PC-9 (cell line): ENCODE measurements at regions of chr14 and their contacts with region 1.

Region 1: GRCh38 chr14:22791301-22791700 is 23.9 kb downstream of the SLC7A7 start:
- DNase-seq: no peak
- H3K4me3 ChIP-seq: no peak overlapping the region
- H3K27ac ChIP-seq: no peak overlapping the region
- H3K4me1 ChIP-seq: peaks cover 19% of the 10 kb centered on the region
- H3K27me3 ChIP-seq: no peaks in the 10 kb centered on the region
- CTCF ChIP-seq: no peak

Region 2: DNA sequence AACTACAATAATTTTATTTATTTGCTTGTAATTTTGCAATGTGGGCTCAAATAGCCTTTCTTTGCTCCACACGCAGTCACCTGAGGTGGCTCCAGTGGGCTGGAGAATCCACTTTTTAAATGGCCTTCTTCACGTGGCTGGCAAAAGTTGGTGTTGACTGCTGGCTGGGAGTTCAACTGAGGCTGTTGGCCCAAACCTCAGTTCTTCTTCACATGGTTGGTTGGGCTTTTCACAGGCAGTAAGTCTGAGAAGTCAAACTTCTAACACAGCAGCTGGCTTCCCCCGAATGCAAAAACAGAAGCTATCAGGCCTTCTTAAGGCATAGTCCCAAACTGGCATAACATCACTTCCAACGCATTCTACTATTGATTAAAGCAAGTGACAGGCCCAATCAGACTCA is 26.9 kb before region 1 on chr14:
- CTCF ChIA-PET with region 1: no interaction called
- POLR2A ChIA-PET with region 1: no interaction called
- intact Hi-C with region 1: no loop called
- DNase-seq: no peak
- H3K4me3 ChIP-seq: no peak overlapping the region
- H3K27ac ChIP-seq: no peak overlapping the region
- H3K4me1 ChIP-seq: peaks cover 7% of the 10 kb centered on the region
- H3K27me3 ChIP-seq: no peaks in the 10 kb centered on the region
- CTCF ChIP-seq: no peak

Region 3: GRCh38 chr14:22776215-22776614 is 15.1 kb before region 1 on chr14:
- CTCF ChIA-PET with region 1: interaction called, 27 read pairs
- POLR2A ChIA-PET with region 1: no interaction called
- intact Hi-C with region 1: no loop called
- DNase-seq: no peak
- H3K4me3 ChIP-seq: no peak overlapping the region
- H3K27ac ChIP-seq: no peak overlapping the region
- H3K4me1 ChIP-seq: no peaks in the 10 kb centered on the region
- H3K27me3 ChIP-seq: no peaks in the 10 kb centered on the region
- CTCF ChIP-seq: no peak

Region 4: GRCh38 chr14:22865424-22866405 is 74.4 kb after region 1 on chr14:
- CTCF ChIA-PET with region 1: interaction called, 10 read pairs
- POLR2A ChIA-PET with region 1: no interaction called
- intact Hi-C with region 1: no loop called
- DNase-seq: no peak
- H3K4me3 ChIP-seq: no peak overlapping the region
- H3K27ac ChIP-seq: no peak overlapping the region
- H3K4me1 ChIP-seq: peaks cover 13% of the 10 kb centered on the region
- H3K27me3 ChIP-seq: no peaks in the 10 kb centered on the region
- CTCF ChIP-seq: no peak